Activated naive CD4-positive, alpha-beta T cell treated with anti-CD3 and anti-CD28 coated beads, Interleukin-2, amount 10 ng/mL, durations not matched to agents 7 days and 5 days (primary cell): ENCODE measurements at regions of chr15 and their contacts with region 1.

Region 1: DNA sequence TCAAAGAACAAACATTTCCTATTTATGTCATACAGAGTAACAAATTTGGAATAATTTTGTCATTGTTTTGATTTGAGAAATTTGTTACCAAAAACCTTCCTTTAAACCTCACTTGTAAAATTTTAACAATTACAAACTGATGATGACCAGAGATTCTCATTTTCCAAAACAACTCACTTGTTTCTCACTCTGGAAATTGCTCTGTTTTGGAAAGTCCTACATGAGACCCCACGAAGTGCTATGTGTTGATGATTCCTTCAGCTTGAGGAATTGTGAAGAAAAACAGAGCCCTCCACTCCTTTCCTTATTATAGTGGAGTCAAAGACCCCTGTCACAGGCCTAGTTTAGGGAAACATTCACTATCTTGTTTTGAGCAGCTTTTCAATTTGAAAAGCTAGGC is 157.6 kb upstream of the RASGRP1 start:
- DNase-seq: no peak
- H3K4me3 Mint-ChIP-seq: no peak overlapping the region
- H3K27ac Mint-ChIP-seq: no peak overlapping the region
- H3K4me1 Mint-ChIP-seq: no peaks in the 10 kb centered on the region
- H3K27me3 Mint-ChIP-seq: peaks cover 6% of the 10 kb centered on the region

Region 2: GRCh38 chr15:38707802-38708671 is 14.2 kb before region 1 on chr15:
- CTCF ChIA-PET with region 1: interaction called, 14 read pairs
- DNase-seq: peak; percentile 54
- H3K4me3 Mint-ChIP-seq: no peak overlapping the region
- H3K27ac Mint-ChIP-seq: no peak overlapping the region
- H3K4me1 Mint-ChIP-seq: peaks cover 20% of the 10 kb centered on the region
- H3K27me3 Mint-ChIP-seq: peaks cover 20% of the 10 kb centered on the region

Region 3: GRCh38 chr15:38745126-38745525 is 22.9 kb after region 1 on chr15:
- CTCF ChIA-PET with region 1: no interaction called
- DNase-seq: no peak
- H3K4me3 Mint-ChIP-seq: no peak overlapping the region
- H3K27ac Mint-ChIP-seq: no peak overlapping the region
- H3K4me1 Mint-ChIP-seq: no peaks in the 10 kb centered on the region
- H3K27me3 Mint-ChIP-seq: peaks cover 12% of the 10 kb centered on the region